Psoas muscle (tissue), 8 donors: ENCODE measurements at regions of chr4 and their contacts with region 1.

Region 1: DNA sequence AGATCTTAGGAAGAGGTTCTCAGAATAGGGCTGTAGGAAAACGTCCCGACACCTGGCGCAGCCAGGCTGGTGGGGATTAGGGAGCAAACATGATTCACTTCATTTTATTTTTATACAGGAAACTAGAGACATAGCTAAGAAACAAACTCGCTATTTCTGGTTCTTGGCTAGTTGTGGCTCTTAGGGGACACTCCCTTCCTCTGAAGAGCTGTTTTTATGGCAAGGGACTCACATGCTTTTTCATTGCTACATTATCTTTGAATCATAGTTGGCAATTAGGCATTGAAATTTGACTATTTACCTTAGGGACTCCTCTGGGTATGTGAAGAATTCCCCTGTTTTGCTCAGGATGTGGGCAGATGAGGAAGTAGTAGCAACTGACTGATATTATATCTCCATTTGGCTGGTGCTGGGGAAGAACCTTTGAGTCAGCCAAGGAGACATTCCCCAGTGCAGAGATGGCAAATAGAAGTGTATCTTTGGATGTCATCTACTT is 174.5 kb downstream of the SMIM20 start:
- DNase-seq: peak in 1 of 2 donors; percentile 62
- ATAC-seq: peak; percentile 45 to 74 (median 65)
- H3K4me3 ChIP-seq: no peak overlapping the region
- H3K27ac ChIP-seq: peak overlapping the region; percentile 68
- H3K4me1 ChIP-seq: peaks cover 31% of the 10 kb centered on the region
- H3K27me3 ChIP-seq: no peaks in the 10 kb centered on the region
- CTCF ChIP-seq: no peak

Region 2: GRCh38 chr4:25915353-25915705 is 173.2 kb before region 1 on chr4:
- intact Hi-C with region 1: loop called in 1 of 2 experiments (anchors 5 kb)
- DNase-seq: no peak
- ATAC-seq: no peak
- H3K4me3 ChIP-seq: peak overlapping the region; percentile 93
- H3K27ac ChIP-seq: peak overlapping the region; percentile 97
- H3K4me1 ChIP-seq: peaks cover 18% of the 10 kb centered on the region
- H3K27me3 ChIP-seq: no peaks in the 10 kb centered on the region
- CTCF ChIP-seq: no peak

Region 3: GRCh38 chr4:26342328-26343037 is 254.0 kb after region 1 on chr4:
- intact Hi-C with region 1: no loop called
- DNase-seq: no peak
- ATAC-seq: peak; percentile 86 to 92 (median 90)
- H3K4me3 ChIP-seq: no peak overlapping the region
- H3K27ac ChIP-seq: peak overlapping the region; percentile 34
- H3K4me1 ChIP-seq: peaks cover 46% of the 10 kb centered on the region
- H3K27me3 ChIP-seq: no peaks in the 10 kb centered on the region
- CTCF ChIP-seq: no peak